Heart right ventricle (tissue), 16 donors: ENCODE measurements at regions of chr15 and their contacts with region 1.

Region 1: DNA sequence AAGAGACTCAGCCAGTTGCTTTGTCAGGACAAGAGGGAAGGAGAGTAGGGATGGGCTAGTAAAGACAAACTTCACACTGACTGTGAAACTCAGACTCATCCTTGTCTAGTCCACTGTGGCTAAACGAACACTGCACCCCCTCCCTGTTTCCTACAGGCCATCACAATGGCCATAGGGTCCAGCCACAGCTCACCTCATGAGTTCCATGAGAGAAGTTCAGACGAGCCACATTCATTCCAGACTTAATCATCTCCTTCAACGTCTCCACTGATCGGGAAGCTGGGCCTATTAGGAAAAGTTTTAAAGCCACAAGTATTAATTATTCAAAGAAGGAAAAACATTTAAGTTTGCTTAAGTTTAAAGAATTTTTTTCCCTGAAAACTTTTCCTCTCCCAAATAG is 13.8 kb downstream of the PKM start:
- DNase-seq: no peak
- ATAC-seq: no peak
- H3K4me3 ChIP-seq: no peak overlapping the region
- H3K27ac ChIP-seq: no peak overlapping the region
- H3K4me1 ChIP-seq: peaks cover 11 to 53% (median 33%) of the 10 kb centered on the region in 9 donors
- H3K27me3 ChIP-seq: no peaks in the 10 kb centered on the region
- CTCF ChIP-seq: no peak

Region 2: DNA sequence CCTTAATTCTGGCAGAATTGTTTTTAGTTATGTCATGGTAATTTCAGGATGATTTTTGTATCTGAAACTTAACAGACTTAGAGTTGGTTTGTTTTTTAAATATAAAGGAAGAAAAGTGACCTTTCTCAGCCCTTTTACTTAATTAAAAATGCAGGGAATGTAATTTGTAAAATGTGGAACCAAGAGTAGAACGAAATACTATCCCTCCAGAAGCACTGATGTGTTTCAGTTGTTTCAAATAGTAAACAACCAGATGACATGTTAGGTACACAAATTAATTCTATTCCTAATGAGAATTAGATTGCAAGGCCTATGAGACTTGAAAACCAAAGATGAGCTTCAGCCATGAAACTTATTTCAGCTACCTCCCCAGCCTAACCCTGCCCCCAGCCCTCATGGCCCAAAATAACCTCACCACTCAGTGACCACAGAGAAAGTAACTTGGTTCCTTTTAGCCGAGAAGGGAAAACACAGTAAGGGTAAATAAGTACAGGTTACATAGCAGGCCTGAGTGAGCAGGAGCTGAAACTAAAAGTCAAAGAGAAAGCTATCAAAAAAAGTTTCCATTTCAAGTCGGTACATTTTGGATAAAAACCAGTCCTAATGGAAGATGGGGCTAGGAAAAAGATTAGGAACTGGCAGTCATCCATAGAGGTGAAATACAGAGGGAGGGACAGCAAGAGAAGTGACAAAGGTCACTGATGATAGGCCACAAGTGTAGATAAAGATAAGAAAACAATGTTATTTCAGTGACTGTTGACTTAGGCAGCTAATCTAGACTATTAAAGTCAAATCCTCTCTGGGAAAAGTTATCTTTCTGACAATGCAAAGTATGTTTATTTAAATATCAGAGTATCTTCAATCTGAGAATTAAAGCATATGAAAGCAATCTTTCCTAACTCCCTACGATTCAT is 75.8 kb before region 1 on chr15:
- intact Hi-C with region 1: no loop called
- DNase-seq: no peak
- ATAC-seq: peak in 5 of 8 donors; percentile 45 to 72 (median 57)
- H3K4me3 ChIP-seq: no peak overlapping the region
- H3K27ac ChIP-seq: peak overlapping the region in 7 of 10 donors; percentile 2 to 69 (median 45)
- H3K4me1 ChIP-seq: peaks cover 0 to 28% (median 13%) of the 10 kb centered on the region in 9 donors
- H3K27me3 ChIP-seq: no peaks in the 10 kb centered on the region
- CTCF ChIP-seq: no peak

Region 3: GRCh38 chr15:72231066-72231846 is 14.0 kb after region 1 on chr15 and contains the start of gene PKM:
- intact Hi-C with region 1: no loop called
- DNase-seq: peak; percentile 95 to 97
- ATAC-seq: peak; percentile 88 to 94 (median 91)
- H3K4me3 ChIP-seq: peak within 1 kb of the TSS; percentile 48 to 99 (median 86)
- H3K27ac ChIP-seq: peak within 1 kb of the TSS; percentile 92 to 100 (median 98)
- H3K4me1 ChIP-seq: peaks cover 20 to 53% (median 48%) of the 10 kb centered on the region in 9 donors
- H3K27me3 ChIP-seq: no peaks in the 10 kb centered on the region
- CTCF ChIP-seq: peak in 1 of 9 donors; percentile 5
- total RNA-seq, gene PKM: 851 to 1,508 (median 1,153) TPM

Region 4: DNA sequence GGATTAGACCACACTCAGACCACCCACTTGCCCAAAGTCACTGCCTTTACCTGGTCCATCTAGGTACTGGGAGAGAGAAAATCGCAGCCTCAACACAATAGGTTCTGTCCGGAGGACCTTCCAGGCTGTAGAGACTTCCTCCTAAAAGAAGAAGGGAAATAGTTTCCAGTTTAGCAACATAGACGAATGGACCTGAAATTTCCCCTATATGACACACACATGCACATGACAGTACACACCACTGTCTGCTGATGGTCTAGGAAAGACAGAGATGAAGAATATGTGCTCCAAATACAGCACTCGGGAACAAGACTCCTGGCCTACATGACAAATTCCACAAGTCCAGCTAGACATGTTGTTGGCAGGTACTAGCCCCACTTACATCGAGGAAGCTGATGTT is 47.8 kb after region 1 on chr15:
- intact Hi-C with region 1: loop called in 1 of 10 experiments (anchors 10 kb)
- DNase-seq: no peak
- ATAC-seq: no peak
- H3K4me3 ChIP-seq: no peak overlapping the region
- H3K27ac ChIP-seq: no peak overlapping the region
- H3K4me1 ChIP-seq: peaks cover 0 to 3% (median 0%) of the 10 kb centered on the region in 9 donors
- H3K27me3 ChIP-seq: no peaks in the 10 kb centered on the region
- CTCF ChIP-seq: no peak